Dorsolateral prefrontal cortex (tissue), 120 donors: ENCODE measurements at regions of chr11 and their contacts with region 1.

Region 1: GRCh38 chr11:126310228-126310991 is 6.5 kb downstream of the DCPS start:
- DNase-seq: peak; percentile 73 to 88 (median 84)
- H3K4me3 ChIP-seq: peak overlapping the region in 1 of 59 donors; percentile 7
- H3K27ac ChIP-seq: peak overlapping the region in 2 of 59 donors; percentile 21 to 32
- H3K27me3 ChIP-seq: no peaks in the 10 kb centered on the region
- CTCF ChIP-seq: peak; percentile 77 to 96 (median 90)

Region 2: GRCh38 chr11:126355324-126355925 is 45.0 kb after region 1 on chr11 and contains the start of gene ST3GAL4:
- intact Hi-C with region 1: loop called (anchors 2 kb)
- DNase-seq: peak; percentile 68 to 86 (median 76)
- H3K4me3 ChIP-seq: peak within 1 kb of the TSS; percentile 60 to 97 (median 78)
- H3K27ac ChIP-seq: peak within 1 kb of the TSS; percentile 63 to 98 (median 91)
- H3K27me3 ChIP-seq: no peaks in the 10 kb centered on the region
- CTCF ChIP-seq: peak in 8 of 56 donors; percentile 10 to 29 (median 20)
- total RNA-seq, gene ST3GAL4: 19.8 to 70.4 (median 32.7) TPM

Region 3: DNA sequence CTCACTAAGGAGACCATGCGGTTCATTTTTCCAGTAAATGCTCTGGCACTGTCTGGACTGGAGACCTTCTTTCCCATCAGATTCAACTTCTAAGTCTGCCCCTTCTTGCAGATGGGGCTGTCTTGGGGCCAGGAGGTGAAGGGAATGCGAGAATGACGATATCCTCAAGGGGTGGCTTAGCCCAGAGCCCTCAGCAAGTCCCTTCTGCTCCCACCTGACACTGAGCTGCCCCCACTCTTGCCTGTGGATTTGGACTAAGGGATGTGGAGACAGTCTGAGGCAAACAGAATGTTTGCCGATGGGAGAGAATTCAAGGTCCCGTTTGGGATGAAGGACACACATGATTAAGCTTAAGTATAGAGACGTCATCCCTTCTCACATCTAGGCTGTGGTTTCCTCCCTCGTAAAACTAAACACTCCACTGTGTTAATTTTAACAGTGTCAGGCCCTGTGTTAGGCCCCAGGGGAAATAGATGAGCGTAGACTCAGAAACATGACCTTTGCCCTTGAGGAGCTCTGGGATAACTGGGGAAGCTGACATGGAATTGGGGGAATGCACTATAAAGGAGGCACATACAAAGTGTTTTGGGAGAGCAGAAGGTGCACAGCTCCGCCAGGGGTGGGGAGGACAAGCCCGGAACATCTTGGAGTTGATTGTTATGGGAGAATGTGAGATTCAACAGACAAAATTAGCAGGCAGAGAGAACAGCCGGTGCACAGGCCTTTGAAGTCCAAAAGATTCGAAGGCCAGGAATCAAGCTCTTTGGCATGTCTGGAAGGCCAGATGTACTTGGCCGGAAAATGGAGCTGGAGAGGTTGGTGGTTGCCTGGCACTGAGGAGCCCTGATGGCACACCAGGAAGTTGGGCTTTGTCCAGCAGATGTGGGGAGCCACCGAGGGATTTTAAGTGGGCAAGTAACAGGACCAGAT is 116.7 kb after region 1 on chr11:
- intact Hi-C with region 1: loop called in 1 of 2 experiments (anchors 5 kb)
- DNase-seq: peak in 3 of 10 donors; percentile 21 to 57 (median 55)
- H3K4me3 ChIP-seq: no peak overlapping the region
- H3K27ac ChIP-seq: peak overlapping the region in 53 of 59 donors; percentile 3 to 85 (median 59)
- H3K27me3 ChIP-seq: no peaks in the 10 kb centered on the region
- CTCF ChIP-seq: no peak

Region 4: GRCh38 chr11:126440792-126441514 is 130.5 kb after region 1 on chr11:
- intact Hi-C with region 1: loop called (anchors 1 to 5 kb)
- DNase-seq: peak; percentile 67 to 89 (median 81)
- H3K4me3 ChIP-seq: peak overlapping the region in 3 of 59 donors; percentile 2 to 18 (median 16)
- H3K27ac ChIP-seq: peak overlapping the region in 6 of 59 donors; percentile 9 to 65 (median 30)
- H3K27me3 ChIP-seq: no peaks in the 10 kb centered on the region
- CTCF ChIP-seq: peak; percentile 90 to 99 (median 98)

Region 5: GRCh38 chr11:126592496-126593410 is 282.3 kb after region 1 on chr11:
- intact Hi-C with region 1: loop called in 1 of 2 experiments (anchors 5 kb)
- DNase-seq: no peak
- H3K4me3 ChIP-seq: no peak overlapping the region
- H3K27ac ChIP-seq: no peak overlapping the region
- H3K27me3 ChIP-seq: no peaks in the 10 kb centered on the region
- CTCF ChIP-seq: no peak

Region 6: DNA sequence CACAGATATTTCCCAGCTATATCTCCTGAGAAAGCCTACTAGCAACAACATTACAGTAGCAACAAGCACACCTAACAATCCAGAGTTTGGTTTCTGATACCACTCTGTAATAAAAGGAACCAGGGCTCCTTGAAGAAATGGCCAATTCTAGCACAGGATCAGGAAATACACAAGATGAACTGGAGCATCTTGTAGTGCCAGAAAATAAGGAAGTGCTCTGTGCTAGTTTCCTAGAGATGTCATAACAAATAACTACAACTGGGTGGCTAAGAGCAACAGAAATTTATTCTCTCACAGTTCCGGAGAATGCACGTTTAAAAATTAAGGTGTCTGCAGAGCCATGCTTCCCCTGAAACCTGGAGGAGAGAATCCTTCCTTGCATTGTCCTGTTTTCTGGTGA is 472.4 kb after region 1 on chr11:
- intact Hi-C with region 1: no loop called
- DNase-seq: no peak
- H3K4me3 ChIP-seq: no peak overlapping the region
- H3K27ac ChIP-seq: no peak overlapping the region
- H3K27me3 ChIP-seq: no peaks in the 10 kb centered on the region
- CTCF ChIP-seq: no peak